ENCODE measurements at regions of chr2 and their contacts with region 1.

Region 1: DNA sequence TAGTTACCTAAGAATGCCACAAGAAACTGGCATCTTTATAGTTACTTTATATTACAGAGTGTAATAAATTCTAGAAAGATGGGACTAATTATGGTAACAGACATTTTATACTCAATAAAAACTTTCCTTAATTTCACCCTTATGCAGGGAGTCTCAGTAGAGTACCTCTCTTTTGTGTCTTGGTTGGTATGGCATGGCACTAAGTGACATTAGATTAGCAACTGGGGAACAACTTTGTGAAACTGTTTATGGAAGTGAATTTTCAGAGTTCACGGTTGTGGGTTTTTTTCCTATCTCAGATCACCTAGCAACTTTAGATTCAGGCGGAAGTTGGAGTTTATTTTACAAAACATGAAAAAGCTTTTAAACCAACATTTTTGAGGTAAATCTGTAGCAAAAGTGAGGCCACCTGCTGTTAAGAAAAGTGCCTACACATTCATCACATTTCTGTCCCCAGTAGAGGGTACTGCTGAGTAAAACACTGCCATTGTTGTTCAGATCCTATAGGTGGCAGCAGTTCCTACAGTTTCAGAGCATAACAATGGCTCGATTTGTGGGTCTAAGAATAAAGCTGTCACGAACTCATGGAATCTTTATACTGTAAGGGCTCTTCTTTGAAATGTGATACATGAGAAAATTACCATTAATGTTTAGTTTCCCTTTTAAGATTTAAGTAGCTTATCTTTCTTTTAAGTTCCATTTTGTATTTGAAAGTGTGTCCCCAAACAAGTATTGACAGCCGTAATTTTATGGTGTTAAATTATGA is 117.6 kb downstream of the CAMKMT start:
- DNase-seq: no peak

Region 2: DNA sequence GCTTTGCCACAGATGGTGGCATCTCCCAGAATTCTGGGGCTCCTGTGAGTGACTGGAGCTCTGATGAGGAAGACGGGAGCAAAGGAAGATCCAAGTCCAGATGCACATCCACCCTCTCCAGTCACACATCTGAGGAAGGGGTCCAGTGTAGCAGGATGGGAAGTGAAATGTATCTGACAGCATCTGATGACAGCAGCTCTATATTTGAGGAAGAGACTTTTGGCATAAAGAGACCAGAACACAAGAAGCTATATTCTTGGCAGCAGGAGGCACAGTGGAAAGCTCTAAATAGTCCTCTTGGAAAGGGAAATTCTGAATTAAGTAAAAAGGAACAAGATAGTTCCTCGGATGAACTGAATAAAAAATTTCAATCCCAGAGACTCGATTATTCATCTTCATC is 779.5 kb before region 1 on chr2:
- intact Hi-C with region 1: loop called in 1 of 2 experiments (anchors 10 kb)
- DNase-seq: no peak

Region 3: DNA sequence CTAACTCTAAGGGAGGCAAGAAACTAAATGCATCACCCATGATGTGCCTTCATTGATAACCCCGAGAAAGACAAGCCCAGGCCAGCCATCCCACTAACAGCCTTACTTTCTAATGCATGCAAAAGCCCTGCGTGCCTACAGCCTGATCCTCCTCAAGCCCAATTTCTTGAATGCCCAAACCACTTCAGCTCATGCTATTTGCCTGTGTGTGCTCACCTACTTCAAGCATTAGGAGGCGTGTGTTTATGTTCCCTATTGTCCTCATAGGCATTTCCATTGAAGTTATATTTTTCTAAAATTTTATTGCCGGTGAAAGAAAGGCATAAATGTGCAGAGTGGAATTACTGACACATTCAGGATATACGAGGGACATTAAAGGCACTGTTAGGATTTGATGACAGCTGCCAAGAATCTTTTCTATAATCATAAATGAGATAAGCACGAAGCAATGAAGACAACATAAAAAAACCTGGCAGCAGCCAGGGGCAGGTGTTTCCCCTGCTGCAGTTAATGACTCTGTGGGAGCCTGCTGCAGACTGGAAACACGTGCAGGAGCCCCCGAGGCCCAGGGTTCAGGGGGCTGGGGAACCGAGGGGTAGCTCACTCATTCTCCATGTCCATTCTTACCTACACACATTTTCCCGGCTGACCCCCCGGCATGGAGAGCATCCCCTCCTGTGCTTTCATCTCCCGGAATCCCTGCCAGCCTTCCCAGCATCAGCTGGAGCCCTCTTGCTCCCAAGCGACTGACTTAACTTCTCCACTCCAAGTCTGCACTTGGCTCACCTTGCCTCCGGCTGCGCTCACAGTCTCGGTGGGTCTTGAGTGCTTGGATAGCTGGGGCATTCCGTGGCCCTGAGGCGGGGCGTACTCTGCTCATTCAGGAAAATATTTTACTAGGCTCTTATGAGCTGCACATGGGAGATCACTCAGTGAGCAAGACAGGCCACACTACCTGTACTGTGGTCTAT is 822.3 kb after region 1 on chr2:
- intact Hi-C with region 1: no loop called
- DNase-seq: no peak